Calu3 (cell line): ENCODE measurements at regions of chr12 and their contacts with region 1.

Region 1: GRCh38 chr12:93979189-93979588 is 169.2 kb upstream of the PLXNC1 start:
- DNase-seq: no peak
- H3K4me3 Mint-ChIP-seq: no peak overlapping the region
- H3K27ac Mint-ChIP-seq: no peak overlapping the region
- H3K4me1 Mint-ChIP-seq: no peaks in the 10 kb centered on the region
- H3K27me3 Mint-ChIP-seq: peaks cover 36% of the 10 kb centered on the region
- CTCF ChIP-seq: peak; percentile 22

Region 2: GRCh38 chr12:93569656-93570551 is 409.3 kb before region 1 on chr12:
- CTCF ChIA-PET with region 1: interaction called, 9 read pairs
- intact Hi-C with region 1: loop called (anchors 1 kb)
- DNase-seq: peak; percentile 89
- H3K4me3 Mint-ChIP-seq: peak overlapping the region; percentile 90
- H3K27ac Mint-ChIP-seq: peak overlapping the region; percentile 79
- H3K4me1 Mint-ChIP-seq: peaks cover 11% of the 10 kb centered on the region
- H3K27me3 Mint-ChIP-seq: peaks cover 28% of the 10 kb centered on the region
- CTCF ChIP-seq: peak; percentile 83

Region 3: DNA sequence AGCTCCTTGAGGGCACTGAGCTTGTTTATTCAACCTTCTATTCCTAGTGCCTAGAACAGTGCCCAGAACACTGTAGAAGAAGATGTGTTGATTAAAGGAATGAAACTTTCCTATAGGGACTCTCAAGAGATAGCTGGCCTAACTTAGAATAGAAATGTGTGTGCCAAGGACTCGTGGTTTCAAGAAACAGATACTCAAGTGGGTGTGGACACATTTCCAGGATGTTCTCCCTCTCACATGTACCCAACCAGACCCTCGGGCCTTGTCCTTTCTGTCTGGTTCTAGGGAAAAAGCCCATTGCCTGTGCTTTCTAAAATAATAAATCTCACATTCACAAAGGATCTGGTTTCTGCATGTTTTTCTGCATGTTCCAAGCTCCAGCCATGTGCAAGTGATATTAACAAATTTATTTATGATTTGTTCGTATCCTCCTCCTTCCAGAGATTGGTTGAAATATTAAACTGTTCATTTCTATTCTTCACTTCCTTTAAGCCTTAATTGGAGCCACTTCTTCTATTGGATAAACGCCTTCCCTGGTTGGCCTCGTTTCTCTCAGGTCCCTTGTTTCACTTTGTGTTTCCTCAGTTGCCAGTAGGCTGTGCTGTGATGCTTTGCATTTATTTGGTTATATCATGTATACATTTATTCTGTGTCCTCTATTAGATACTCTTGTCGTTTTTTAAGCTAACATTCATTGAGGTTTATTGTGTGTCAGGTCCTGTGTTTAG is 212.2 kb before region 1 on chr12:
- CTCF ChIA-PET with region 1: no interaction called
- intact Hi-C with region 1: loop called (anchors 1 kb)
- DNase-seq: peak; percentile 40
- H3K4me3 Mint-ChIP-seq: no peak overlapping the region
- H3K27ac Mint-ChIP-seq: no peak overlapping the region
- H3K4me1 Mint-ChIP-seq: peaks cover 9% of the 10 kb centered on the region
- H3K27me3 Mint-ChIP-seq: no peaks in the 10 kb centered on the region
- CTCF ChIP-seq: peak; percentile 24

Region 4: GRCh38 chr12:93802698-93803423 is 176.3 kb before region 1 on chr12:
- CTCF ChIA-PET with region 1: no interaction called
- intact Hi-C with region 1: no loop called
- DNase-seq: no peak
- H3K4me3 Mint-ChIP-seq: no peak overlapping the region
- H3K27ac Mint-ChIP-seq: no peak overlapping the region
- H3K4me1 Mint-ChIP-seq: no peaks in the 10 kb centered on the region
- H3K27me3 Mint-ChIP-seq: no peaks in the 10 kb centered on the region
- CTCF ChIP-seq: no peak